HEK293T (cell line): ENCODE measurements at regions of chr22 and their contacts with region 1.

Region 1: DNA sequence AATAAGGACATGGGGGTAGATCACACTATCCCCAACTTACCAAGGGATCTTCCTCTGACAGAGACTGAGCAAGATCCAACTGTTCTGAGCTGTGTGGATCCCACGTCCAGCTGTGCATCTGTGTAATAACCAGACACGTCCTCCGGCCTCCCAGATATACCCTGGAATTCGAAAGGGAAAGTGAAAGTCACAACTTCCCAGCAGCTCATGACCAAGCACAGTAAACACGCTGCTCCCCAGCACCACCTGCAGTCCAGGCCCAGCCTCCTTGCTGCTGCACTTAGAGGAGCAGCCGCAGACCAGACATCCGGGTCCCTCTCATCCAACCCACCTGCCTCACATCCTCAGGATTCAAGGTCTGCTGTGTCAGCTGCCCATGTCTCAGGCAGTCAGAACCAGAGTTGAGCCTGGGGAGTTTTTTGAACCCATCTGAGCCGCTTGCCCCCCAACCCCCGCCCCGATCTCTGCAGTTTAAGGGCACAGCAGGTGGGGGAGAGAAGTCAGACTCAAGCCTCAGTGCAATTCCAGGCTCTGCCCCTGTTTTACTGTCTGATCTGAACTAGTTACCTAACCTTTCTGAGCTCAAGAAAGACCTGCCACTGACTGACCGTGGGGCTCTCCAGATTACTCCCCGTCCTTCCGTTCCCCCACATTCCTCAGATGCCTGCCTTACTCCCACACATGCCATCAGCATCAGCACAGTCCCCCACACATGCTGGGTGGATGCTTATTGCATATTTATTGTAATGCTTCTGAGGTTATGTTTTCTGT is at the start of gene APOL2:
- DNase-seq: peak; percentile 94

Region 2: DNA sequence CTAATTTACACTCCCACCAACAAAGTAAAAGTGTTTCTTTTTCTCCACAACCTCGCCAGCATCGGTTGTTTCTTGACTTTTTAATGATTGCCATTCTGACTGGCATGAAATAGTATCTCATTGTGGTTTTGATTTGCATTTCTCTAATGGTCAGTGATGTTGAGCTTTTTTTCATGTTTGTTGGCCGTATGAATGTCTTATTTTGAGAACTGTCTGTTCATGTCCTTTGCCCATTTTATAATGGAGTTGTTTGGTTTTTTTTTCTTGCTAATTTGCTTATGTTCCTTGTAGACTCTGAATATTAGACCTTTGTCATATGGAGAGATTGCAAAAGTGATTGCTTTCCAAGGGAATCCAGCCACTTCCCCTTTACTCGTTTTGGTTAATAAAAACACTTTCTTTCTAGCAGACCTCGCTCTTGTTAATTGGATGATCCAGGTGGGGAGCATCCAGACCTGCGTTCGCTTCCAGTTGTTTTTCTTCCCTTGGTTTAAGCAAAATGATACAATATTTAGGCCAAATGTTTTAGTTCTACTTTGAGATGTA is 20.9 kb before region 1 on chr22:
- CTCF ChIA-PET with region 1: interaction called, 10 read pairs
- POLR2A ChIA-PET with region 1: no interaction called
- DNase-seq: no peak

Region 3: GRCh38 chr22:36258701-36259614 is 19.4 kb after region 1 on chr22:
- CTCF ChIA-PET with region 1: interaction called, 7 read pairs
- POLR2A ChIA-PET with region 1: interaction called, 12 read pairs
- DNase-seq: no peak

Region 4: GRCh38 chr22:36286471-36287224 is 47.1 kb after region 1 on chr22:
- CTCF ChIA-PET with region 1: interaction called, 7 read pairs
- POLR2A ChIA-PET with region 1: interaction called, 10 read pairs
- DNase-seq: peak; percentile 96

Region 5: GRCh38 chr22:36384766-36385481 is 145.3 kb after region 1 on chr22:
- CTCF ChIA-PET with region 1: no interaction called
- POLR2A ChIA-PET with region 1: no interaction called
- DNase-seq: no peak